PC-9 (cell line): ENCODE measurements at regions of chr12 and their contacts with region 1.

Region 1: GRCh38 chr12:51371295-51371953 is 19.8 kb downstream of the GALNT6 start:
- DNase-seq: peak; percentile 94 to 98
- H3K4me3 ChIP-seq: peak overlapping the region; percentile 6; the same call in 1 of the 2 replicates
- H3K27ac ChIP-seq: peak overlapping the region; percentile 84
- H3K4me1 ChIP-seq: peaks cover 35% of the 10 kb centered on the region
- H3K27me3 ChIP-seq: no peaks in the 10 kb centered on the region
- CTCF ChIP-seq: no peak

Region 2: GRCh38 chr12:51118706-51119105 is 252.7 kb before region 1 on chr12:
- CTCF ChIA-PET with region 1: no interaction called
- POLR2A ChIA-PET with region 1: no interaction called
- intact Hi-C with region 1: no loop called
- DNase-seq: peak; percentile 21 to 88
- H3K4me3 ChIP-seq: no peak overlapping the region
- H3K27ac ChIP-seq: 0 out of 2 replicates have a peak overlapping the region, but pooled peaks have one; percentile 4
- H3K4me1 ChIP-seq: peaks cover 10% of the 10 kb centered on the region; the same call in 1 of the 2 replicates
- H3K27me3 ChIP-seq: no peaks in the 10 kb centered on the region
- CTCF ChIP-seq: no peak

Region 3: DNA sequence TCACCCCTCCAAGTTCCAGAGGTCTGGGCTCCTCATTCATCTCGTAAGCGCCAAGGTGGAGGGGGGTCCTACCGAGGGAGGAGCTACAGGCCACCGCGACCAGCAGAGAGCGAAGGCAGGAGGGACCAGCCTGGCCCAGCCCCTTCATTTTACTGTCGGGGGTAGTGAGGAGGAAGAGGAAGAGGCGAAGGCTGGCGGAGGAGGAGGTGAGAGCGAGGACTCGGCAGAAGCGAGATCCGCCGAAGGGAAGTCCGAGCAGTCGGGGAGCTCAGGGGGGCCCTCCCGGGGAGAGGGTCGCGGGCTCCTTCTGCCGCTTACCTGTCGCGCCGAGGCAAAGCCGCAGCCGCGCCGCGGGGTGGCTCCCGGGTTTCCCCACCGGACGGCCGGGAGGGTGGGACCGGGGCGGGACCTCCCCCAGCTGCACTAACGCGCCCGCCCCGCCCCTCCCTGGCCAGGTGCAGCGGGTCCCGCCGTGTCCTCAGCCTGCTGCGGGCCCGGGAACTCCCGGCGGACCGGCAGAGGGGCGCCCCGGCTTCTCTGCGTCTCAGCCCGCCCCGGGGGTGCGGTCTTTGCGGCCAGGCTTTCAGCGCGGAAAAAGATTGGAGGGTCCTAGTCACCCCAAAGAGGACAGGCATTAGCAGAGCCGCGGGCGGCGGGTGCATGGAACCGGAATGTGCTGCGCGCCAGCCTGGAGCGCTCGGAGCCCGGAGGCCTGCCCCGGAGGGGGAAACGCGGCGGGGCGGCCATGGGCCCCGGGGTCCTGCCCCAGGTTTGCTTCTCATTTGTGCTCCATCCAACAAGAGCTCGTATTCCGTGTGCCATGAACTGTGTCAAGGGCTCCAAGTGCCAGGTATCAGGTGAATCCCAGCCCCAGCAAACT is 20.1 kb after region 1 on chr12 and contains the start of gene GALNT6:
- CTCF ChIA-PET with region 1: interaction called, 5 read pairs
- POLR2A ChIA-PET with region 1: interaction called, 10 read pairs
- intact Hi-C with region 1: loop called (anchors 2 kb)
- DNase-seq: peak; percentile 55 to 85
- H3K4me3 ChIP-seq: peak within 1 kb of the TSS; percentile 91
- H3K27ac ChIP-seq: peak within 1 kb of the TSS; percentile 36
- H3K4me1 ChIP-seq: peaks cover 59% of the 10 kb centered on the region
- H3K27me3 ChIP-seq: no peaks in the 10 kb centered on the region
- CTCF ChIP-seq: no peak
- total RNA-seq, gene GALNT6: 73.0 and 83.5 TPM in 2 replicates

Region 4: DNA sequence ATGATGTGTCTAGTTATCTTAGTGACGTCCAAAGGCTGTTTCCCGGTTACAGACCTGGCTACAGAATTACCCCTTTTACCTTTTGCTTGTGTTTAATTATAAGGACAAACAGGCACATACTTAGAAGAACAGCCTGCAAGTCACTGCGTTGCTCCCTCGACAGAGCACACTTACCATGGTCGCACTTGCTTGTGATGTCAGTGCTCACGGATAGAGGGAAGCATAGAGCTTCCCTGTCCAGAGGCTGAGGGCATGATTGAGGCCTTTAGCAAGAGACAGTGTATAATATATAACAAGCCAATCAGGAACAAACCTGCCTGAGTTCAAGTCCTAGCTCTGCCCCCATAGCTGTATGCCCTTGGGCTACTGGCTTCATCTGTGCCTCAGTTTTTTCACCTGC is 146.4 kb after region 1 on chr12:
- CTCF ChIA-PET with region 1: no interaction called
- POLR2A ChIA-PET with region 1: no interaction called
- intact Hi-C with region 1: no loop called
- DNase-seq: no peak
- H3K4me3 ChIP-seq: no peak overlapping the region
- H3K27ac ChIP-seq: no peak overlapping the region
- H3K4me1 ChIP-seq: no peaks in the 10 kb centered on the region
- H3K27me3 ChIP-seq: peaks cover 9% of the 10 kb centered on the region
- CTCF ChIP-seq: no peak

Region 5: GRCh38 chr12:51531978-51532497 is 160.6 kb after region 1 on chr12:
- CTCF ChIA-PET with region 1: interaction called, 7 read pairs
- POLR2A ChIA-PET with region 1: no interaction called
- intact Hi-C with region 1: loop called (anchors 1 kb)
- DNase-seq: peak in 1 of 2 experiments; percentile 73
- H3K4me3 ChIP-seq: no peak overlapping the region
- H3K27ac ChIP-seq: no peak overlapping the region
- H3K4me1 ChIP-seq: no peaks in the 10 kb centered on the region
- H3K27me3 ChIP-seq: peaks cover 14% of the 10 kb centered on the region
- CTCF ChIP-seq: peak; percentile 87

Region 6: GRCh38 chr12:51678086-51678724 is 306.8 kb after region 1 on chr12:
- CTCF ChIA-PET with region 1: no interaction called
- POLR2A ChIA-PET with region 1: no interaction called
- intact Hi-C with region 1: loop called (anchors 2 kb)
- DNase-seq: peak in 1 of 2 experiments; percentile 4
- H3K4me3 ChIP-seq: no peak overlapping the region
- H3K27ac ChIP-seq: no peak overlapping the region
- H3K4me1 ChIP-seq: no peaks in the 10 kb centered on the region
- H3K27me3 ChIP-seq: peaks cover 54% of the 10 kb centered on the region
- CTCF ChIP-seq: peak; percentile 68

Region 7: DNA sequence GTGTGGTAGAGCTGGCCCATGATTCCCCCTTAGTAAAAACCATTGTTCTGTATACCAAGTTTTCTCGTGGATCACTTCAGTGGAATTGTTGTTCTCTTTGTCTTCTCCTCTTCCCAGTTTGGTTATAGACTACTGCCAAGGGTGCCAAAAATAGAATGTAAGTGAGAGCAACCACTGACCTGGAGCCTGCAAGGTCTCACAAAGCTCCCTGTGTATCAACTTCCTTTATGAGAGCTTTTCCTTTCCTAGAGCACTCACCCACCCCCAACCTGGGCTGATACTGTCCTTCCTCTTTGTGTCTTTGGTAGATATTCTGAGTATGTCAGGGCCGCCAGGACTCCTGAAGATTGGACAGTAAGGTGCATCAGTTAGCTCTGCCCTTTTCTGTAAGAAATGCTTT is 320.6 kb after region 1 on chr12:
- CTCF ChIA-PET with region 1: no interaction called
- POLR2A ChIA-PET with region 1: no interaction called
- intact Hi-C with region 1: no loop called
- DNase-seq: no peak
- H3K4me3 ChIP-seq: no peak overlapping the region
- H3K27ac ChIP-seq: no peak overlapping the region
- H3K4me1 ChIP-seq: no peaks in the 10 kb centered on the region
- H3K27me3 ChIP-seq: peaks cover 81% of the 10 kb centered on the region
- CTCF ChIP-seq: no peak

Region 8: DNA sequence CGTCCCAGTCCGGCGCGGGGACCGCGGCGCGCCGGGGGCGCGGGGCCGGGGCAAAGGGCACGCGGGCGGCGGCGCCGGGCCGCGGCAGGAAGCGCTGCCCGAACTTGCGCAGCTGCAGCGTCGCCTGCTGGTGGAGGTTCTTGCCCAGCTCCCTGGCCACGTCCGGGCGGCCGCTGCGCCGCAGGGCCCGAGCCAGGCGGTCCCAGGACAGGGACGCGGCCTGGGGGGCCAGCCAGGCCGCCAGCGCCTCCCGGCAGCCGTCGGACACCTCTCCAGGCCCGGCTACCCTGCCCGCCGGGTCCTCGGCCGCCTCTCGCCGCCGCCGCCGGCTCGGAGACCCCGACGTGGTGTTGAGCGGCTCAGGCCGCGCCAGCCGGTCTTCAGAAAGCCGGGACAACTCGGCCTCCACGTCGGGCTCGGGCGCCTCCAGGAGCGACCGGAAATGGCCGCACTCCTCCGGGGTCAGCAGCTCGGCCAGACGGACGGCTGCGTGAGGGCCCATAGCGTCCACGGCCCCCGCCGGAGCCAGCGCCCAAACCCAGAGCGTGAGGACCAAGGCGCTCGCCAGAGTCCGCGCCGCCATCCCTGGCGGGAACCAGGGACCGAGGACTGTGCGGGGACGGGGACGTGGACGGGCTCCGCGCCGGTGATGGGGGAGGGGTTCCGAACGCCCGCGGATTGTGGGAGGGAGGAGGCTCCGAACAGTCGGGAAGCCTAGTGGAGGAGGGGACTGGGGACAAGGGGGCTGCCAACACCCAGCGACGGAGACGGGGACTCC is 443.1 kb after region 1 on chr12:
- CTCF ChIA-PET with region 1: no interaction called
- POLR2A ChIA-PET with region 1: no interaction called
- intact Hi-C with region 1: no loop called
- DNase-seq: peak in 1 of 2 experiments; percentile 13
- H3K4me3 ChIP-seq: no peak overlapping the region
- H3K27ac ChIP-seq: no peak overlapping the region
- H3K4me1 ChIP-seq: no peaks in the 10 kb centered on the region
- H3K27me3 ChIP-seq: peaks cover 32% of the 10 kb centered on the region
- CTCF ChIP-seq: no peak